Motor neuron (in vitro differentiated cells): ENCODE measurements at regions of chr18 and their contacts with region 1.

Region 1: GRCh38 chr18:22563098-22563707 is 145.5 kb upstream of the CTAGE1 start:
- ATAC-seq: peak in 4 of 8 experiments; percentile 17 to 77 (median 56)
- H3K4me3 ChIP-seq: no peak overlapping the region
- H3K27ac ChIP-seq: no peak overlapping the region
- H3K4me1 ChIP-seq: peaks cover 6% of the 10 kb centered on the region in 2 donors

Region 2: GRCh38 chr18:21914739-21915319 is 648.4 kb before region 1 on chr18:
- in situ Hi-C with region 1: loop called in 1 of 9 experiments (anchors 25 kb)
- ATAC-seq: peak in 4 of 8 experiments; percentile 43 to 74 (median 60)
- H3K4me3 ChIP-seq: no peak overlapping the region
- H3K27ac ChIP-seq: no peak overlapping the region
- H3K4me1 ChIP-seq: no peaks in the 10 kb centered on the region

Region 3: GRCh38 chr18:22169007-22169864 is 394.0 kb before region 1 on chr18 and contains the start of gene GATA6:
- in situ Hi-C with region 1: loop called in 3 of 9 experiments (anchors 10 to 25 kb)
- ATAC-seq: peak; percentile 68 to 85 (median 82)
- H3K4me3 ChIP-seq: peak within 1 kb of the TSS; percentile 15 to 43 (median 35)
- H3K27ac ChIP-seq: no peak within 1 kb of the TSS
- H3K4me1 ChIP-seq: peaks cover 3 to 9% of the 10 kb centered on the region in 2 donors
- total RNA-seq, gene GATA6: 0.05 to 2.1 (median 0.24) TPM in 7 of 8 experiments, not detected in the other

Region 4: GRCh38 chr18:22517356-22517755 is 45.8 kb before region 1 on chr18:
- in situ Hi-C with region 1: no loop called
- ATAC-seq: no peak
- H3K4me3 ChIP-seq: no peak overlapping the region
- H3K27ac ChIP-seq: no peak overlapping the region
- H3K4me1 ChIP-seq: no peaks in the 10 kb centered on the region